ENCODE measurements at regions of chr5 and their contacts with region 1.

Region 1: GRCh38 chr5:52693280-52693679 is 94.4 kb upstream of the ITGA1 start:
- DNase-seq: peak; percentile 50
- ATAC-seq: peak; percentile 57
- H3K4me3 Mint-ChIP-seq: no peak overlapping the region
- H3K27ac Mint-ChIP-seq: no peak overlapping the region
- H3K4me1 Mint-ChIP-seq: peaks cover 9% of the 10 kb centered on the region
- H3K27me3 Mint-ChIP-seq: peaks cover 6% of the 10 kb centered on the region

Region 2: GRCh38 chr5:52743970-52744369 is 50.7 kb after region 1 on chr5:
- CTCF ChIA-PET with region 1: interaction called, 10 read pairs
- DNase-seq: peak; percentile 83
- ATAC-seq: peak; percentile 94
- H3K4me3 Mint-ChIP-seq: peak overlapping the region; percentile 25
- H3K27ac Mint-ChIP-seq: peak overlapping the region; percentile 92
- H3K4me1 Mint-ChIP-seq: peaks cover 74% of the 10 kb centered on the region
- H3K27me3 Mint-ChIP-seq: peaks cover 2% of the 10 kb centered on the region

Region 3: GRCh38 chr5:52776116-52776515 is 82.8 kb after region 1 on chr5:
- CTCF ChIA-PET with region 1: interaction called, 14 read pairs
- DNase-seq: peak; percentile 85
- ATAC-seq: peak; percentile 67
- H3K4me3 Mint-ChIP-seq: peak overlapping the region; percentile 46
- H3K27ac Mint-ChIP-seq: peak overlapping the region; percentile 77
- H3K4me1 Mint-ChIP-seq: peaks cover 52% of the 10 kb centered on the region
- H3K27me3 Mint-ChIP-seq: no peaks in the 10 kb centered on the region

Region 4: DNA sequence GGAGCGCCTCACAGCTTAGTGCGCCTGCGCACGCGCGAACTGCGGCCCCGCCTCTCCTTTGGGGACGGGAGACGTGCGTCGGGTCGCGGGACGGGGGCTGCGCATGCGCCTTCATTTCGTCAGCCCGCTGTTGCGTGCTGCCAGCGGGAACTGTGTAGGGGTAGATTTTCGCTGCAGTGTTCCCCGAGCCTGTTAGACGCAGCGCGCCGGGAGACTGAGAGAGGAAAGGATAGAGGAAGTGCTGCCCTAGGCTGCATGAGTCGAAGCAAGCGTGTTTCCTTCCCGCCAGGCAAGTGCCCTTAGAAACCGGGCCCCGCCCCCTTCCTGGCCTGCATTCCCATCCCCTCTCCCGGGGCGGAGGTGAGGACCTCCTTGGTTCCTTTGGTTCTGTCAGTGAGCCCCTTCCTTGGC is 106.7 kb after region 1 on chr5:
- CTCF ChIA-PET with region 1: interaction called, 19 read pairs
- DNase-seq: peak; percentile 97
- ATAC-seq: peak; percentile 85
- H3K4me3 Mint-ChIP-seq: peak overlapping the region; percentile 95
- H3K27ac Mint-ChIP-seq: peak overlapping the region; percentile 93
- H3K4me1 Mint-ChIP-seq: peaks cover 48% of the 10 kb centered on the region
- H3K27me3 Mint-ChIP-seq: no peaks in the 10 kb centered on the region

Region 5: DNA sequence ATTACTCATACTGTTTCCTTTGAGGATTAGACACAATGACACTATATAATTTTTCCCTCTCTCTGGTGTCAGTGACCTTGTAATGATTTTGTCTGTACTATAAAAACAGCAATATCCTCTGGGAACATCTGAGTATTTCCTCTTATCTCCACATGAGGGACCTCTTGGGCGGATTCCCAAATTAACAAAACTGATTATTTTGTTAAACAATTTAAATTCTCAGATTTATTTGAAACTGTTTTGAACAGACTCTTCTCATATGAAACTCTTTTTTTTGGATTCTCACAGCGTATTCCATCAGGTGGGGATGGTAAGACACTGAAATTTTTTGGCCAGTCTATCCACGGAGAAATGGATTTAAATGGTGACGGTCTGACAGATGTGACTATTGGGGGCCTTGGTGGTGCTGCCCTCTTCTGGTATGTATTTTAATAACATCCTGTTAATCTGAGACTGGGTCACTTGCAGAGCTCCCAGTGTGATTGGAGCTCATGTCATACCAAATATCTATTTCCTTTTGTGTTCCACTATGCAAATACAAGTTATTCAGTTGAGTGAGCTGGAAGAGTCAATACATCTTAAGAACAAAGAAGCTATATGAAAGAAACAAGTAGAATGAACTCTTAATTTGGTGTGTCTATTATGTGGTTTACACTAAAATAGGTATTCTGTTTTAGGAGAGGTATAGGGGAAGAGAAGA is 222.0 kb after region 1 on chr5:
- CTCF ChIA-PET with region 1: interaction called, 16 read pairs
- DNase-seq: peak; percentile 67
- ATAC-seq: peak; percentile 98
- H3K4me3 Mint-ChIP-seq: peak overlapping the region; percentile 41
- H3K27ac Mint-ChIP-seq: peak overlapping the region; percentile 7
- H3K4me1 Mint-ChIP-seq: peaks cover 10% of the 10 kb centered on the region
- H3K27me3 Mint-ChIP-seq: no peaks in the 10 kb centered on the region